ENCODE measurements at regions of chrX and their contacts with region 1.

Region 1: DNA sequence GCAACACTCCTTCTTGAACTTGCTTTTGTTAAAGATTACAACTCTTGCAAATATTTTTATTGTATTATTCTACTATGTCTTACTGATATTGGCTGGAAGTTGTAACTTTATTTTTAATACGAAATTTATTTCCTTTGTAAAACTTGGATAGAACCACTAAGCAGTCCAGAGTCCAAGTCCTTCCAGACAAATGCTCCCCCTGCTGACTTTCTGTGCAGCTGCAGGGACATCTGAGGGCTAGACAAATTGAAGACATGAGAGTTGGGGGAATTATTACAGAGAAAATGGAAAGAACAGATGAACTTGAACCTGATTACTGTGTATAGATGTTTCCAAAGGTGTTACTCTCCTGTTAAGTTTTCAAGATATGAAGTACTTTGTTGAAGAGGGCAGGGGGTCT is 238.8 kb downstream of the GRIA3 start:
- ATAC-seq: peak in 6 of 8 experiments; percentile 38 to 63 (median 49)
- H3K4me3 ChIP-seq: no peak overlapping the region
- H3K27ac ChIP-seq: no peak overlapping the region
- H3K4me1 ChIP-seq: no peaks in the 10 kb centered on the region

Region 2: DNA sequence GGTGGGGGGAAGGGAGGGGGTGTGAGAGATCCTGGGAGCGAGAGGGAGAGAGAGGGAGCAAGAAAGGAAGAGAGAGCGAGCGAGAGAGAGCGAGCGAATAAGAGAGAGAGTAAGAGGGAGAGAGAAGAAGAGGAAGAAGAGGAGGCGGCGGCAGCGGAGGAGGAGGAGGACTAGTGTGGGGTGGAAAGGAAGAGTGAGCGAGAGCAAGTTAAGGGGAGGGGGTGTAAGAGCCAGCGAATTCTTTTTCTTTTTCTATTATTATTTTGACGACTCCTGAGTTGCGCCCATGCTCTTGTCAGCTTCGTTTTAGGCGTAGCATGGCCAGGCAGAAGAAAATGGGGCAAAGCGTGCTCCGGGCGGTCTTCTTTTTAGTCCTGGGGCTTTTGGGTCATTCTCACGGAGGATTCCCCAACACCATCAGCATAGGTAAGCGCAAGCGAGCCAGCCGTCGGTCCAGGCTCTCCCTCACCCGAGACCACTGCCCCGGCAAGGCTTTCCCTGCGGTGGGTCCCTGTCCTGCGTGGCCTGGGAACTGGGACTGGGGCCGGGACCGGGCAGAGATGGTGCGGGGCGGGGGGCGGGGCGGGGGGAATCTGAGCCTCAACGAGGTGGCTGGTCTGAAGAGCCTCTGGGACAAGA is 238.5 kb before region 1 on chrX and contains the start of gene GRIA3:
- in situ Hi-C with region 1: loop called in 1 of 9 experiments (anchors 25 kb)
- ATAC-seq: peak in 6 of 8 experiments; percentile 25 to 50 (median 41)
- H3K4me3 ChIP-seq: peak within 1 kb of the TSS; percentile 43 to 61 (median 56)
- H3K27ac ChIP-seq: peak within 1 kb of the TSS in 1 of 2 donors; percentile 68
- H3K4me1 ChIP-seq: peaks cover 0 to 5% of the 10 kb centered on the region in 2 donors
- total RNA-seq, gene GRIA3: 0.28 to 11.3 (median 6.8) TPM in 7 of 8 experiments, not detected in the other

Region 3: GRCh38 chrX:123570004-123570590 is 147.2 kb after region 1 on chrX:
- in situ Hi-C with region 1: no loop called
- ATAC-seq: no peak
- H3K4me3 ChIP-seq: no peak overlapping the region
- H3K27ac ChIP-seq: no peak overlapping the region
- H3K4me1 ChIP-seq: no peaks in the 10 kb centered on the region

Region 4: DNA sequence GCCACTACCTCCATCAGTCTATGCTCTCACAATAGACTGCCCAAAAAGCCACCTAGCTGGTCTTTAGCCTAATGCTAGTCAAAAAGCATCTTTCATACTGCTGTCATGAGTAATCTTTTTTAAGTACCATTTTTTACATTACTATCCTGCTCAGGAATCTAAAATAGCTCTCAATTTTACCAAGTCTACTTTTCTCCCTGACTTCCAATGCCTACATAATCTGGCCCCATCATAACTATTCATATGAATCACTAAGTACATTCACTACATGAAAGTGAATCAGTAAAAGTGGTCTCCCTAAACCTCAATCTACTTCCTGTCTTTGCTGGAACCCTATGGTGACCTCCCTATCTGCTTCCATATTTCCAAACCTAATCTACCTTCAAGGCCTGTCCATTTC is 204.1 kb after region 1 on chrX:
- in situ Hi-C with region 1: no loop called
- ATAC-seq: no peak
- H3K4me3 ChIP-seq: no peak overlapping the region
- H3K27ac ChIP-seq: no peak overlapping the region
- H3K4me1 ChIP-seq: no peaks in the 10 kb centered on the region